B cell (primary cell): ENCODE measurements at regions of chr21 and their contacts with region 1.

Region 1: GRCh38 chr21:33915368-33916199 is at the start of gene ATP5PO:
- DNase-seq: peak; percentile 97
- ATAC-seq: peak; percentile 100
- H3K4me3 ChIP-seq: peak within 1 kb of the TSS; percentile 62 to 99 (median 85)
- H3K4me3 Mint-ChIP-seq: peak within 1 kb of the TSS; percentile 98
- H3K27ac ChIP-seq: peak within 1 kb of the TSS; percentile 49 to 86
- H3K27ac Mint-ChIP-seq: peak within 1 kb of the TSS; percentile 94
- H3K4me1 ChIP-seq: peaks cover 14 to 16% of the 10 kb centered on the region in 2 donors
- H3K4me1 Mint-ChIP-seq: peaks cover 27% of the 10 kb centered on the region
- H3K27me3 ChIP-seq: no peaks in the 10 kb centered on the region
- H3K27me3 Mint-ChIP-seq: no peaks in the 10 kb centered on the region
- CTCF ChIP-seq: no peak
- total RNA-seq, gene ATP5PO: 123 and 124 TPM in 2 replicates

Region 2: DNA sequence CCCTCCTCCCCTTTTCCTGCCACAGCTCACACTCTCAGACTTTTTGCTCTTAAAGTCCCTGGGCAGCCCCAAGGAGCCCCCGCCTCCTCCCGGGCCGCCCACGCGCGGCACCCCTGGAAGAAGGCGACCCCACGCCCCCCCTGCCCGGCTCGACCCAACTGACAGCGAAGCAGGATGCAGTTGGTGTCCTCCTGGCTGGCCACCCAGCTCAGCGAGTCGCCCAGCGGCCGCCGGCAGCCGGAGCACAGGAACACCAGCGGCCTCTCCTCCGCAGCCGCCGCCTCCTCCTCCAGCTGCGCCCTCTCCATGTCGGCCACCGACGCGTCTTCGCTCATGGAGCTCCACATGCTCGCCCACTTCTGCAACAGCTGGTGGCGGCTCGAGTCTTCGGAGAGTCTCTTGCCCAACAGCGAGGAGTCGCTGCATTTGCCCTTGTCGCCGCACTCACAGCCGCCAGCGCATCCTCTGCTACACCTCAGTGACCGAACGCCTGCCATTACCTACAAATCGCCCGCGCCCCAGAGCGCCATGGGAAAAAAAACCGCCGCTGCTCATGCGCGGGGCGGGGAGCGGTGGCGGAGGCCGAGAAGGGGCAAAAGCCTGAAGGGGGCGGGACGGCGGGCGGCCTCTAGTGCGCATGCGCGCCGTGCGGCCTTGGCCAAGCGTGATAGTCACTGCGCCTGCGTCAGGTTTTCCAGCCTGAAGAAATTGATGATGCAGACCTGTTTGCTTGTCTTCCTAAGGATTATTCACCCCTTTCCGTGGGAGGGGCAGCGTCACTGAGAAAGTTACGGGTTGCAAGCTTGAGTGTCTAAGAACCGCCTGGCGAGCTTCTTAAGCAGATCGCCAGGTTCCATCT is 1636.8 kb before region 1 on chr21 and contains the start of gene MIS18A:
- CTCF ChIA-PET with region 1: no interaction called
- POLR2A ChIA-PET with region 1: no interaction called
- intact Hi-C with region 1: loop called (anchors 10 kb)
- DNase-seq: peak; percentile 97
- ATAC-seq: peak; percentile 97
- H3K4me3 ChIP-seq: peak within 1 kb of the TSS; percentile 70 to 86 (median 82)
- H3K4me3 Mint-ChIP-seq: peak within 1 kb of the TSS; percentile 100
- H3K27ac ChIP-seq: peak within 1 kb of the TSS; percentile 29 to 44
- H3K27ac Mint-ChIP-seq: peak within 1 kb of the TSS; percentile 91
- H3K4me1 ChIP-seq: peaks cover 16 to 22% of the 10 kb centered on the region in 2 donors
- H3K4me1 Mint-ChIP-seq: peaks cover 22% of the 10 kb centered on the region
- H3K27me3 ChIP-seq: no peaks in the 10 kb centered on the region
- H3K27me3 Mint-ChIP-seq: no peaks in the 10 kb centered on the region
- CTCF ChIP-seq: no peak
- total RNA-seq, gene MIS18A: 8.8 and 10.4 TPM in 2 replicates

Region 3: DNA sequence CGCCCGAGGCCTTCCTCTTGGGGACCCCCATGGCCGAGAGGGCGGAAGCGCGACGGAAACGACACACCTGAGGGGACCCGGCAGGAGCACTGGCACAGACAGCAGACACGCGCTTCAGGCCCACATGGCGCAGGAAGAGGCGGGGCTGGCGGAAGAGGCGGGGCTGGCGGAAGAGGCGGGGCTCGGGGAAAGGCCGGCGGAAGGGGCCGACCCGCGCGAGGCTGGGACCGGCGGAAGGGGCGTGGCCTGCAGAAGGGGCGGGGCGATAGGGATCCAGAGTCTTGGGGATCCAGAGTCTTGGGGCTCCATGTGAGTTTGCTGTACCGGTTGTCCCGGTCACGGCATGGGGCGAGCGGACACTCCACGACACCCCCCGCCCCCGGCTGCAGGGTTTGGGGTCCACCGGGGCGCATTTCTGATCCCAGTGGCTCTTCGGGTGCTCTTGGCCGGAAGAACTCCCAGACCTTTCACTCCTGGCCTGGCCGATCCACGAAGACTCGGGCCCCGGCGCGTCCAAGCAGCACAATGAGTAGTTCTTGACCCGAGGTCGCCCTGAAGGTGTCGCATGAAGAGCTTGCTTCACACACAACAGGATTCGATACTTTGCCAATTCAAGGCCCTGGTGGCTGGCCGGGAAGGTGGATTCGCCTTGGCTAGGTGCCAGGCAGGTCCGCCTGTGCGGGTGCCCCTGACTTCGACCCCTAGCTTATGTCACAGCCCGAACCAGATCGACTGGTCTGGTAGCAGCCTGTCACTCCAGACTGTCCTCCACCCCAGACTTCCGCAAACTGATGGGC is 1522.5 kb before region 1 on chr21 and contains the start of gene URB1:
- CTCF ChIA-PET with region 1: no interaction called
- POLR2A ChIA-PET with region 1: no interaction called
- intact Hi-C with region 1: loop called (anchors 10 kb)
- DNase-seq: peak; percentile 93
- ATAC-seq: peak; percentile 96
- H3K4me3 ChIP-seq: peak within 1 kb of the TSS; percentile 67 to 99 (median 95)
- H3K4me3 Mint-ChIP-seq: peak within 1 kb of the TSS; percentile 92
- H3K27ac ChIP-seq: peak within 1 kb of the TSS; percentile 74 to 90
- H3K27ac Mint-ChIP-seq: peak within 1 kb of the TSS; percentile 90
- H3K4me1 ChIP-seq: peaks cover 18 to 24% of the 10 kb centered on the region in 2 donors
- H3K4me1 Mint-ChIP-seq: peaks cover 39% of the 10 kb centered on the region
- H3K27me3 ChIP-seq: peaks cover 0 to 11% (median 6%) of the 10 kb centered on the region in 4 experiments
- H3K27me3 Mint-ChIP-seq: peaks cover 11% of the 10 kb centered on the region
- CTCF ChIP-seq: no peak
- total RNA-seq, gene URB1: 14.9 and 15.2 TPM in 2 replicates

Region 4: DNA sequence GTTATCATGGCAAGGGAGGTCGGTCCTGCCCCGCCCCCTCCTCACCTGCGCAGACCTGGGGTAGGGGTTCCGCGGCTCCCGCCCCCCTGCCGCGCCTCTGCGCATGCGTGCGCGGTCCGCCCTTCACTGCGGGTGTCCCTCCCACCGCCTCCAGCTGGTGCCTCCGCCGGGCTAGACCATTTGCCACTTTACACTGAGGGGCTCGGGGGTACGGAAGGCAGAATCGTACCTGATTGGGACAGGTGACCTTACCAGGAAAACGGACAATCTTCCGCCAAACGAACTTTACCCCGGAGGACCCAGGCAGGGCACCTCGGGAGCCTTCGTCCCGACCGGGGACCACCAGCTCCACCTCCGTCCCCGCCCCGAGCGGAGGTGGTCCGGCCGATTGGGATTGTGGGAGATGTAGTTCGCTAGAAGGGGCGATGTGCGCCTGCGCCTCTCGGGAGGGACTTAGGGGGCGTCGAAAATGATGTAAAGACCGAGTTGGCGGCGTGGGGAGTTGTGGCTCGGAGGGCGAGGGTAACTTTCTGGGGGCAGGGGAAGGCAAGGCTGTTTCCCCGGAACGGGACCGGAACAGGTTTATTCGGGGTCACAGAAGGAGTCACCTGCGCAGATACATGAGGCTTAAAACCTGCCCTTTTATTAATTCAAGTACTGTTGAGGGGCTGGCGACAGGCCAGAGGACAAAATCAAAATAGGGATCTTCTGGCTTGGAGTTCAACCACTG is 424.0 kb before region 1 on chr21 and contains the start of gene DNAJC28:
- CTCF ChIA-PET with region 1: no interaction called
- POLR2A ChIA-PET with region 1: no interaction called
- intact Hi-C with region 1: loop called (anchors 2 kb)
- DNase-seq: peak; percentile 98
- ATAC-seq: peak; percentile 97
- H3K4me3 ChIP-seq: peak within 1 kb of the TSS; percentile 65 to 87 (median 80)
- H3K4me3 Mint-ChIP-seq: peak within 1 kb of the TSS; percentile 87
- H3K27ac ChIP-seq: peak within 1 kb of the TSS; percentile 29 to 62
- H3K27ac Mint-ChIP-seq: peak within 1 kb of the TSS; percentile 87
- H3K4me1 ChIP-seq: peaks cover 0 to 9% of the 10 kb centered on the region in 2 donors
- H3K4me1 Mint-ChIP-seq: peaks cover 10% of the 10 kb centered on the region
- H3K27me3 ChIP-seq: no peaks in the 10 kb centered on the region
- H3K27me3 Mint-ChIP-seq: no peaks in the 10 kb centered on the region
- CTCF ChIP-seq: no peak
- total RNA-seq, gene DNAJC28: 2.4 and 2.5 TPM in 2 replicates